Head of caudate nucleus (tissue), 42 donors: ENCODE measurements at regions of chr2 and their contacts with region 1.

Region 1: DNA sequence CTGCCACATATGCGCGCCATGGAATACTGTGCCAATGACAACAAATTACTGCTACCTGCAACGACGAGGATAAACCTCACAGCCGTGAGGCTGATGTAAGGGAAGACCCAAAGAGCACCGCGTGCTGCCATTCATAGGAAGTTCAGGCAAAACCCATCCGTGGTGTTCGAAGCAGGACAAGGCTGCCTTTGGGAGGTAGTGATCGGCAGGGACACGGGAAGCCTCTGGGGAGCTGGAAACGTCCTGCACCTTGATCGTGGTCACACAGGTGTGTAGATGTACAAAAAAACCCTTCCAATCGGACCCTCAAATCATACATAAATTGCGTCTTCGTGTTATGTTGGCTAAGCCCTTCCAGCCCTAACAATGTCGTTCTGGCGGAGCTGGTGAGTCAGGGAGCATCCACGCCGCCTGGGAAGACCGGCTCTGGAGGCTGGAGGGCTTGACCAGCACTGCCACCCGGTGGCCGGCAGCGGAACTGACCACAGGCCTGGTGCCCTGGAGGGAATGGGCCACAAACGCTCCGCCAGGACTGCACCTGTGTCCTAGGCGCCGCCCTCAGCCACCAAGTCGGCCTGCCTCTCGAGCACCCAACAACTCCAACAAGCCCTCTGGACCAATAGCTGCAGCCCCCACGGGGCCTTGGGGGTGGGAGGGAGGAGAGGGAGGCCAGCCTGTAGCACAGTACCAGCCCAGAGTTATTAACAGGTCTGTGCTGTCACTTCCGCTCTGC is 4.1 kb upstream of the NEURL3 start:
- DNase-seq: peak; percentile 66 to 95 (median 88)

Region 2: GRCh38 chr2:96305091-96305978 is 203.9 kb before region 1 on chr2 and contains the start of gene SNRNP200:
- intact Hi-C with region 1: loop called (anchors 5 kb)
- DNase-seq: peak; percentile 79 to 97 (median 94)

Region 3: DNA sequence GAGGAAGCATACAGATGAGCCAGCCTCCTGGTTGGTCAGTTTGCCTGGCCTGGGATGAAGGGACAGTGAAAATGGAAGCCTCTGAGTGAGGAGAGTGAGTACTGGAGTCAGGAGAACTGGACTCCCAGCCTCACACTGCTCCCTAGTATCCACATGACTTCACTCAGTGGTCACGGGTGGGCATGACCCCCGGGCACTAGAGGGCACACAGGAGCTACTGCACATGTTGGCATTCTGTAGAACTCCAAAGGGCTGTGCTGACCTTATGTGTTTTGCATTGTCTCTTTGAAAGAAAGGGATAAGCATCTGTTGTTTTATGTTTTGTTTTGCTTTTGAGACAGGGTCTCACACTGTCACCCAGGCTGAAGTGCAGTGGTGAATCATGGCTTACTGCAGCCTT is 150.0 kb before region 1 on chr2:
- intact Hi-C with region 1: loop called (anchors 5 kb)
- DNase-seq: peak; percentile 38 to 93 (median 78)

Region 4: DNA sequence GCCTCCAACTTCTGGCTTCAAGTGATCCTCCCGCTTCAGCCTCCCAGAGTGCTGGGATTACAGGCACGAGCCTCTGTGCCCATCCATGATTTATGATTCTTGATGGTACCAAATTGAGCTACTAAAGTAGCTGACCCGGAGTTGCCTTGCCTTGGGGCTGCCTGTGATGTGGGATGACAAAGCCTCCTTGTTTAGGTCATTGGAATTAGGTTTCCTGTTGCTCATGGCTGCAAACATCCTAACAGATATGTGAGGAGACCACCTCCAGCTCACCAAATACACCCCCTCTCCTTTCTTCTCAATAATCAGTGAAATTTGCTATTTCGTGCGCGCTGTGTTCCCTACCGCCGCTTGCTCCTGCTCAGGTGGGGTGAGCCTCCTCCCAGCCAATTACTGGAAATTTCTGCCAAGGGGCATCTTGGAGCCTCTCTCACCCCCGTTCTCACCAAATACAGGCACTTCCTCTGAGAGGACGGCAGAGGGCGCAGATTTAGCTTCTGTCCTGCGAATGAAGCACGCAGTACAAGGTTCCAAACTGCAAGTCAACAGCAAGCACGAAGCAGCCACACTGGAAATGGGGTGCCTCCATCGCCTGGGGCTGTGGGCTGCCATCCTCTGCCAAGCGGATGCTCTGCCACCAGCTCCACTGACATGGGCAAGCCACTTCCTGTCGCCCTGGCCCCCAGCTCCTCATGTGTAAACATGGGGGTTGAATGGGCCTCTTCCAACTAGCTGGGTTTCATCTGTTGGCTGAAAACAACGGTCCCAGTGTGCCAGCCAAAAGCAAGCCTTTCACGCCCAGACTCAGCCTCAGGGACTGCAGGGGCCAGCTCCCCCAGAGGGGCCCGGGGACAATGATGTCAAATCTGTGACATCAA is 102.0 kb before region 1 on chr2:
- intact Hi-C with region 1: loop called (anchors 5 kb)
- DNase-seq: peak; percentile 63 to 93 (median 83)